B cell (primary cell): ENCODE measurements at regions of chr9 and their contacts with region 1.

Region 1: DNA sequence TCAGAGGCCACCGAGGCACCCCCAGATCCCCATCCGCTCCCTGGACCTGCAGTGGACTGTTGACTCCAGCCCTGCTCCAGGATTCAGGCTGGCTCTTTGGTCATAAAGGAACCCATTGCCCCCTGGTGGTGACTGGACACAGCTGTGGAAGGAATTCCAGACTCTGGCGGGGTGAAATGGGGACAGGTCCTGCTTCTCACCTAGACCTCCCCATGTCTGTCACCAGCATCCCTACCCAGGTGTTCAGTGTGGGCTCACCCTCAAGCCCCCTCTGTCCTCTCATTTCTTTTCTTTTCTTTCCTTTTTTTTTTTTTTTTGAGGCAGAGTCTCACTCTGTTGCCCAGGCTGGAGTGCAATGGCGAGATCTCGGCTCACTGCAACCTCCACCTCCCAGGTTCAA is 25.5 kb upstream of the STXBP1 start:
- DNase-seq: peak; percentile 63
- ATAC-seq: peak; percentile 68
- H3K4me3 ChIP-seq: no peak overlapping the region
- H3K4me3 Mint-ChIP-seq: no peak overlapping the region
- H3K27ac ChIP-seq: no peak overlapping the region
- H3K27ac Mint-ChIP-seq: no peak overlapping the region
- H3K4me1 ChIP-seq: no peaks in the 10 kb centered on the region
- H3K4me1 Mint-ChIP-seq: no peaks in the 10 kb centered on the region
- H3K27me3 ChIP-seq: peaks cover 0 to 24% (median 7%) of the 10 kb centered on the region in 4 experiments
- H3K27me3 Mint-ChIP-seq: peaks cover 37% of the 10 kb centered on the region
- CTCF ChIP-seq: peak; percentile 63

Region 2: GRCh38 chr9:127455305-127455992 is 131.1 kb before region 1 on chr9:
- CTCF ChIA-PET with region 1: no interaction called
- POLR2A ChIA-PET with region 1: no interaction called
- intact Hi-C with region 1: no loop called
- DNase-seq: peak; percentile 52
- ATAC-seq: no peak
- H3K4me3 ChIP-seq: no peak overlapping the region
- H3K4me3 Mint-ChIP-seq: peak overlapping the region; percentile 36
- H3K27ac ChIP-seq: peak overlapping the region; percentile 37 to 56
- H3K27ac Mint-ChIP-seq: peak overlapping the region; percentile 70
- H3K4me1 ChIP-seq: peaks cover 15 to 30% of the 10 kb centered on the region in 2 donors
- H3K4me1 Mint-ChIP-seq: peaks cover 31% of the 10 kb centered on the region
- H3K27me3 ChIP-seq: no peaks in the 10 kb centered on the region
- H3K27me3 Mint-ChIP-seq: no peaks in the 10 kb centered on the region
- CTCF ChIP-seq: peak; percentile 33

Region 3: DNA sequence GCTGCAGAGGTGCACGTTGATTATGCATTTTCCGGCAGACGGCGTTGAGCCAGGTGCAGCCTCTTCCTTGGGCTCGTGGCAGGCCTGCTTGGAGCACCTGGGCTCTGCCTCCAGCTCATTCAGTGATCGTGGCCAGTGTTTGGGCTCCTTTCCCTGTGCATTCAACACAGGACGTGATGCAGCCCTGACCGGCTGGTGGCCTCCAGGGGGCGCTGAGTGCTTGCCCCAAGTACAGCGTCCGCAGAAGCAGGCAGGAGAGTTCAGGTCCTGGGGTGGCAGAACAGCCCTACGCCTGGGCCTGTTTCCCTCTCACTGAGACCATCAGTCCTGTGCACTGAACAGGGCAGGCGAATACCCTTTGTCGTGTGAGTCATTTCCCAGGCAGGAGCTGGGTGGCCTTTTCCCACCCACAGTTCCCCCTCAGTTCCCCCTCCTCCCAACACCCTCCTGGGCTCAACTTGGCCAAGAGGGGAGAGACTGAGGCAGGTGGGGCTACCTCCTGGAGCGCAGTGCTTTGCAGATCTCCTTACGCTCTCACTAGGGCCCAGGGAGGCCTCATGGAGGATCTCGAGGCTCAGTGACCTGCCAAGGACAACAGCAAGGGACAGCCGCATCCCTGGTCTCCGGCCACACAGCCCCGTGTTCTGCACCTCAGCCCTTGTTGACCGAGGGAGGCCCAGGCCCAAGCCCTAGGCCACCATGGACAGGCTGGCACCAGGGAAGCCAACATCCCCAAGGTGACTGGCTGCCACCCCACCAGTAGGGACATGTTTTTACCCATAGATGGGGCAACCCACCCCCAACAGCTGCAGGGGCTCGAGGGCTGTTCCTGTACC is 82.4 kb before region 1 on chr9:
- CTCF ChIA-PET with region 1: interaction called, 50 read pairs
- POLR2A ChIA-PET with region 1: no interaction called
- intact Hi-C with region 1: no loop called
- DNase-seq: peak; percentile 82
- ATAC-seq: peak; percentile 85
- H3K4me3 ChIP-seq: no peak overlapping the region
- H3K4me3 Mint-ChIP-seq: no peak overlapping the region
- H3K27ac ChIP-seq: no peak overlapping the region
- H3K27ac Mint-ChIP-seq: no peak overlapping the region
- H3K4me1 ChIP-seq: no peaks in the 10 kb centered on the region
- H3K4me1 Mint-ChIP-seq: no peaks in the 10 kb centered on the region
- H3K27me3 ChIP-seq: no peaks in the 10 kb centered on the region
- H3K27me3 Mint-ChIP-seq: no peaks in the 10 kb centered on the region
- CTCF ChIP-seq: peak; percentile 79

Region 4: DNA sequence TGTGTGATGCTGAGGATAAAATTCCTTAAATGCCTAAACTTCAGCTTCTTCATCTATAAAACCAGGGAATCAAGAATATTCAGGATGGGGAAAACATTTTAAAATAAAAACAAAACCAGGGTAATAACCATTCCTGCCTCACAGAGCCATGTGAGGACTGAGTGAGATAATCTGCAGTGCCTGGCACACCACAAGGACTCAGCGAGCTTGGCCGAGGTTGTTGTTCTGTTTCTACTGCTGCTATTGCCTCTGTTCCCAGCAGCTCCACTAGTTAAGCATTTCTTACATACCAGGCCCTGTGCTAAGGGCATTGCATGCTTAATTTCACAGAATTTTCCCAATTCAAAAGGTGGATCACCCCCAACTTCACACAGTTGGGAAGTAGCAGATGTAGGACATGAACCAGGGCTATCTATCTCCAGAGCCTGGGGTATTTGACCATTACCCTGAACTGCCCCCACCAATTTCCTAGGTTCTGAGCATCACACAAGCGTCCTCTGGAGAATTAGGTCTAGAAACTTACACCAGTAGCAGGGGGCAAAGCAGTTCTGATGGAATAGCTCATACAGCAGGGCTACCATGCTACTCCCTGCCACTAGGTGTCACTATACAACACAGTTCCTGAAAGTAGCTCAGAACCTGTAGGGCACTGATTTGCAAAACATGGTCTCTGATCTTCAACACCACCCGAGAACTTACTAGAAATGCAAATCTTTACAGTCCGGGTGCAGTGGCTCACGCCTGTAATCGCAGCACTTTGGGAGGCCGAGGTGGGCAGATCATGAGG is 60.9 kb before region 1 on chr9:
- CTCF ChIA-PET with region 1: interaction called, 16 read pairs
- POLR2A ChIA-PET with region 1: no interaction called
- intact Hi-C with region 1: no loop called
- DNase-seq: no peak
- ATAC-seq: no peak
- H3K4me3 ChIP-seq: no peak overlapping the region
- H3K4me3 Mint-ChIP-seq: no peak overlapping the region
- H3K27ac ChIP-seq: no peak overlapping the region
- H3K27ac Mint-ChIP-seq: no peak overlapping the region
- H3K4me1 ChIP-seq: no peaks in the 10 kb centered on the region
- H3K4me1 Mint-ChIP-seq: no peaks in the 10 kb centered on the region
- H3K27me3 ChIP-seq: no peaks in the 10 kb centered on the region
- H3K27me3 Mint-ChIP-seq: no peaks in the 10 kb centered on the region
- CTCF ChIP-seq: peak; percentile 31

Region 5: GRCh38 chr9:127626752-127627493 is 40.4 kb after region 1 on chr9:
- CTCF ChIA-PET with region 1: no interaction called
- POLR2A ChIA-PET with region 1: no interaction called
- intact Hi-C with region 1: no loop called
- DNase-seq: no peak
- ATAC-seq: no peak
- H3K4me3 ChIP-seq: no peak overlapping the region
- H3K4me3 Mint-ChIP-seq: no peak overlapping the region
- H3K27ac ChIP-seq: no peak overlapping the region
- H3K27ac Mint-ChIP-seq: no peak overlapping the region
- H3K4me1 ChIP-seq: no peaks in the 10 kb centered on the region
- H3K4me1 Mint-ChIP-seq: no peaks in the 10 kb centered on the region
- H3K27me3 ChIP-seq: no peaks in the 10 kb centered on the region
- H3K27me3 Mint-ChIP-seq: peaks cover 23% of the 10 kb centered on the region
- CTCF ChIP-seq: no peak

Region 6: DNA sequence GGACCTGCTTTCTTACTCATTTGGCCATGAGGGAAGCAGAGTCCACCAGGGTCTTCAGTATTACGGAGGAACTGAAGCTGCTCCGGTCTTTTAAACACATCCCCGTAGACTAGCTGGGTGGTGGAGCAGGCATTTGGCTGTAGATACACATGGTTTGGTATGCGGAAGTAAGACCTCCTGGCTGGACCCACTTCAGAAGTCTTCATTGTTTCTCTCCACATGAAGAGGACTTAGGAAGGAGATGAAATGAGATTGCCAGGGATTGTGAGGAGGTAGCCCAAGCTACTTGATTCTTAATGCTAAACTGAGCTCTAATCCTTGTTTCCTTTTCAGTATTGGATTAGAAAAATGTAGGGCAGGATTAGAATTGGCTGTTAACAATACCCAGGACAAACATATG is 58.4 kb after region 1 on chr9:
- CTCF ChIA-PET with region 1: no interaction called
- POLR2A ChIA-PET with region 1: no interaction called
- intact Hi-C with region 1: no loop called
- DNase-seq: no peak
- ATAC-seq: no peak
- H3K4me3 ChIP-seq: no peak overlapping the region
- H3K4me3 Mint-ChIP-seq: no peak overlapping the region
- H3K27ac ChIP-seq: no peak overlapping the region
- H3K27ac Mint-ChIP-seq: no peak overlapping the region
- H3K4me1 ChIP-seq: no peaks in the 10 kb centered on the region
- H3K4me1 Mint-ChIP-seq: no peaks in the 10 kb centered on the region
- H3K27me3 ChIP-seq: peaks cover 0 to 13% (median 2%) of the 10 kb centered on the region in 4 experiments
- H3K27me3 Mint-ChIP-seq: peaks cover 15% of the 10 kb centered on the region
- CTCF ChIP-seq: no peak

Region 7: DNA sequence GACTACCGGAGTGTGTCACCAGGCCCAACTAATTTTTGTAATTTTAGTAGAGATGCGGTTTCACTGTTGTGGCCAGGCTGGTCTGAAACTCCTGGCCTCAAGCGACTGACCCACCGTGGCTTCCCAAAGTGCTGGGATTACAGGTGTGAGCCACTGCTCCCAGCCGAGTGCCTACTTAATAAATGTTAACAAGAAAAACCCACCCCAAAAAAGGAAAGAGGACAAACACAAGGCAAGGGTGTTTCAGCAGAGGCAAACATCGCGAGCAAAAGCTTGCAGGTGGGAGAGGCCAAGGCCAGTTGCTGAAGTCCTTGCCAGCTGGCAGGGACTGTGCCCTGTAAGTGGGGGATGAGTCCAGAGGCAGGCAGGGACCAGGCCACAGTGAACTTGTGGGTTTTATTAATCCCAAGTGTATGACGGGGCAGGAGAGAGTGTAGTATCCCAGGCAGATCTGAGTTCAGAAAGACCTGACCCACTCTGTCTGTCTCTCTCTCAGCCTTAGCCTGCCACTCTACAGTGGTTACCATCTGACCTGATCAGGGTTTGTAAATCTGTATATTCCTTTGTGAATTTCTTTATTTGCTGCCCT is 209.8 kb after region 1 on chr9:
- CTCF ChIA-PET with region 1: no interaction called
- POLR2A ChIA-PET with region 1: interaction called, 10 read pairs
- intact Hi-C with region 1: no loop called
- DNase-seq: no peak
- ATAC-seq: peak; percentile 29
- H3K4me3 ChIP-seq: no peak overlapping the region
- H3K4me3 Mint-ChIP-seq: peak overlapping the region; percentile 67
- H3K27ac ChIP-seq: peak overlapping the region; percentile 32 to 33
- H3K27ac Mint-ChIP-seq: peak overlapping the region; percentile 89
- H3K4me1 ChIP-seq: peaks cover 20 to 29% of the 10 kb centered on the region in 2 donors
- H3K4me1 Mint-ChIP-seq: peaks cover 29% of the 10 kb centered on the region
- H3K27me3 ChIP-seq: no peaks in the 10 kb centered on the region
- H3K27me3 Mint-ChIP-seq: no peaks in the 10 kb centered on the region
- CTCF ChIP-seq: no peak